ENCODE measurements at regions of chr15 and their contacts with region 1.

Region 1: DNA sequence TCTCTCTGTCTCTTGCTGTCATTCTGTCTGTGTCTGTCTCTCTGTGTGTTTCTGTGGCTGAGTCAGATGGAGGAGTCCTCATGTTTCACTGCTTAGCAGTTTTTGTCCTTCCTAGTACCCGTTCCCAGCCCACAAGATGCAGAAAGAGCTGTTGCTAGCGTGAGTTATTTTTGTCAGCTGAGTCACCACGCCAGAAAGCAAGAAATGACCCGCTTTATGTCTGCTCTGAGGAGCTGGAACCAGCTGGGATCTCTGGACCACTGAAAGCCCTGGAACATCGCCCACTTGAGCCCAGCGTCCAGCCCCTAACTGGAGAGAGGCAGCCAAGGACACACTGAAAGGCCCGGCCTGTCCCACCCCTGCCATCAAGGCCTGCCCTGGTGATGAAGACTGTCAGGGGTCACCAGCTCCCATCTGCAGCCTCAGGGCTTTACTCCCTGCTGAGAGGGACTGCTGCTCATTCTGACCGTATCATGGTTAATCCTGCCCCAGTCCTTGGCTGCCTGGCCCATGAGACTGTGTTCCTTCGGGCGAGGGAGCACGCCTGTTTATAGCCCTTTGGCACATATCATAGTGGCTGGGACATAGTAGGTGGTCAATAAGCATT is 101.7 kb upstream of the TPM1 start:
- DNase-seq: peak; percentile 68 to 94
- H3K4me3 ChIP-seq: no peak overlapping the region
- H3K27ac ChIP-seq: peak overlapping the region; percentile 81 to 92
- H3K4me1 ChIP-seq: peaks cover 16 to 17% of the 10 kb centered on the region in 2 donors
- H3K27me3 ChIP-seq: no peaks in the 10 kb centered on the region
- CTCF ChIP-seq: no peak

Region 2: DNA sequence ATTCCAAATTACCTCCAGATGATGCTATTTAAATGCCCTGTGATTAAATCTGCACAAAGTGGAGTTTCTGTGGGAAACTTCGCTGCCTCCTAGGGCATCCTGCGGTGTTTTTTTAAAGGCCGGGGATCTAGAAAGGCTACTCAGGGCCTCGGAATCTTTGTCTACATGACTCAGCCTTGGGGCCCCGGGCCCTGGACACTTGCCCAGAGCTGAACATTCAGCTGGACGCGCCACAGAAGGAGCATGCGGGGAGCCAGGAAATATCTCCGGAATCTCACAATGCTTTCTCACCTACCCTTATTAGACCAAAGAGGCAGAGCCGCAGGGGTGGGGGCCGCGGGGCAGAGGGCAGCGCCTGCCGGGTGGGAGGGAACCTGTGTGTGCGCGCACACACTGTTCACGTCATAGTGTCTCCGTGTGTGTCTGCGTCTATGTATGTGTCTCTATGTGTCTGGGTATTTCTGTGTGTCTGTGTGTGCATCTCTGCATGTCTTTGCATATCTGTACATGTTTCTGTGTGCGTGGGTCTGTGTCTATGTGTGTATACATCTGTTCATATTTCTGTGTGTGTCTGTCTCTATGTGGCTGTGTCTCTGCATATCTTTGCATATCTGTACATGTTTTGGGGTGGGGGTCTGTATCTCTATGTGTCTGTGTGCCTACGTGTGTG is 43.7 kb before region 1 on chr15:
- intact Hi-C with region 1: loop called (anchors 5 kb)
- DNase-seq: peak; percentile 75 to 97
- H3K4me3 ChIP-seq: peak overlapping the region in 1 of 2 donors; percentile 19
- H3K27ac ChIP-seq: peak overlapping the region; percentile 72 to 81
- H3K4me1 ChIP-seq: peaks cover 8 to 36% of the 10 kb centered on the region in 2 donors
- H3K27me3 ChIP-seq: no peaks in the 10 kb centered on the region
- CTCF ChIP-seq: no peak

Region 3: GRCh38 chr15:62922514-62922913 is 18.3 kb before region 1 on chr15:
- intact Hi-C with region 1: loop called (anchors 1 kb)
- DNase-seq: no peak
- H3K4me3 ChIP-seq: no peak overlapping the region
- H3K27ac ChIP-seq: peak overlapping the region; percentile 9 to 39
- H3K4me1 ChIP-seq: peaks cover 0 to 13% of the 10 kb centered on the region in 2 donors
- H3K27me3 ChIP-seq: no peaks in the 10 kb centered on the region
- CTCF ChIP-seq: no peak

Region 4: GRCh38 chr15:63019539-63020109 is 78.8 kb after region 1 on chr15:
- intact Hi-C with region 1: loop called (anchors 5 kb)
- DNase-seq: no peak
- H3K4me3 ChIP-seq: no peak overlapping the region
- H3K27ac ChIP-seq: no peak overlapping the region
- H3K4me1 ChIP-seq: peaks cover 6 to 32% of the 10 kb centered on the region in 2 donors
- H3K27me3 ChIP-seq: no peaks in the 10 kb centered on the region
- CTCF ChIP-seq: no peak

Region 5: DNA sequence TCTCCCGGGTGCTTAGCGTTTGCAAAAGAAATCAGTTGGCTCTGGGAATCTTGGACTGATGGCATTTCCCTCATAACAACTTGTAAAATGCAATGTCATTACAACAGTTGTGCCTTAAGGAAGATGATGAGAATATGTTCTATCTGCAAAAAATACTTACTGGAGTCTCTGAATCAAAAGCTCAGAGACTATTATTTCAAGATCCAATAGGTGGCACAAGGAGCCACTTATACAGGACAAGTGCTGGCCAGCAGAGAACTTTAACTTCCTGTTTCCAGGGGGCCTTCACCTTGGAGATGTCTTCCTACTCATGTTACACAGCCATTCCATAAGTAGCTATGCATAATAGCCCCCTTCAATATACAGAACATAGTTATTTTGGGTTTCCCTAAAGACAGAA is 225.4 kb after region 1 on chr15:
- intact Hi-C with region 1: no loop called
- DNase-seq: no peak
- H3K4me3 ChIP-seq: no peak overlapping the region
- H3K27ac ChIP-seq: no peak overlapping the region
- H3K4me1 ChIP-seq: no peaks in the 10 kb centered on the region
- H3K27me3 ChIP-seq: no peaks in the 10 kb centered on the region
- CTCF ChIP-seq: peak in 1 of 3 experiments; percentile 8